ENCODE measurements at regions of chr19 and their contacts with region 1.

Region 1: DNA sequence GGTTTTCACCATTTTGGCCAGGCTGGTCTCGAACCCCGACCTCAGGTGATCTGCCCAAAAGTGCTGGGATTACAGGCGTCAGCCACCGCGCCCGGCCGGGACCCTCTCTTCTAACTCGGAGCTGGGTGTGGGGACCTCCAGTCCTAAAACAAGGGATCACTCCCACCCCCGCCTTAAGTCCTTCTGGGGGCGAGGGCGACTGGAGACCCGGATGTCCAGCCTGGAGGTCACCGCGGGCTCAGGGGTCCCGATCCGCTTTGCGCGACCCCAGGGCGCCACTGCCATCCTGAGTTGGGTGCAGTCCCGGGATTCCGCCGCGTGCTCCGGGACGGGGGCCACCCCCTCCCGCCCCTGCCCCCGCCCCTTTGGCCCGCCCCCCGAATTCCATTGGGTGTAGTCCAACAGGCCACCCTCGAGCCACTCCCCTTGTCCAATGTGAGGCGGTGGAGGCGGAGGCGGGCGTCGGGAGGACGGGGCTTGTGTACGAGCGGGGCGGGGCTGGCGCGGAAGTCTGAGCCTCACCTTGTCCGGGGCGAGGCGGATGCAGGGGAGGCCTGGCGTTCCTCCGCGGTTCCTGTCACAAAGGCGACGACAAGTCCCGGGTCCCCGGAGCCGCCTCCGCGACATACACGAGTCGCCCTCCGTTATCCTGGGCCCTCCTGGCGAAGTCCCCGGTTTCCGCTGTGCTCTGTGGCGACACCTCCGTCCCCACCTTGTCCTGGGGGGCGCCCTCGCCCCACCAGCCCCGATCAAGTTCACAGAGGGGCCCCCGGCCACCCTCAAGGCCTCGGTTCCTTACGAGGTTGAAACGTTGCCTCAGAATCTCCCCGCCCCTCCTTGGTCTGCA is 1.0 kb downstream of the LDLR start:
- DNase-seq: peak; percentile 90 to 98 (median 94)
- ATAC-seq: peak; percentile 91
- H3K4me3 ChIP-seq: peak overlapping the region; percentile 98
- H3K27ac ChIP-seq: peak overlapping the region; percentile 92
- H3K4me1 ChIP-seq: peaks cover 46 to 64% of the 10 kb centered on the region in 2 experiments
- H3K27me3 ChIP-seq: no peaks in the 10 kb centered on the region
- CTCF ChIP-seq: peak in 1 of 3 experiments; percentile 28; a peak in 2 of 6 replicates
- EP300 ChIP-seq: no peak
- POLR2A ChIP-seq: peak; percentile 80
- RAD21 ChIP-seq: no peak

Region 2: DNA sequence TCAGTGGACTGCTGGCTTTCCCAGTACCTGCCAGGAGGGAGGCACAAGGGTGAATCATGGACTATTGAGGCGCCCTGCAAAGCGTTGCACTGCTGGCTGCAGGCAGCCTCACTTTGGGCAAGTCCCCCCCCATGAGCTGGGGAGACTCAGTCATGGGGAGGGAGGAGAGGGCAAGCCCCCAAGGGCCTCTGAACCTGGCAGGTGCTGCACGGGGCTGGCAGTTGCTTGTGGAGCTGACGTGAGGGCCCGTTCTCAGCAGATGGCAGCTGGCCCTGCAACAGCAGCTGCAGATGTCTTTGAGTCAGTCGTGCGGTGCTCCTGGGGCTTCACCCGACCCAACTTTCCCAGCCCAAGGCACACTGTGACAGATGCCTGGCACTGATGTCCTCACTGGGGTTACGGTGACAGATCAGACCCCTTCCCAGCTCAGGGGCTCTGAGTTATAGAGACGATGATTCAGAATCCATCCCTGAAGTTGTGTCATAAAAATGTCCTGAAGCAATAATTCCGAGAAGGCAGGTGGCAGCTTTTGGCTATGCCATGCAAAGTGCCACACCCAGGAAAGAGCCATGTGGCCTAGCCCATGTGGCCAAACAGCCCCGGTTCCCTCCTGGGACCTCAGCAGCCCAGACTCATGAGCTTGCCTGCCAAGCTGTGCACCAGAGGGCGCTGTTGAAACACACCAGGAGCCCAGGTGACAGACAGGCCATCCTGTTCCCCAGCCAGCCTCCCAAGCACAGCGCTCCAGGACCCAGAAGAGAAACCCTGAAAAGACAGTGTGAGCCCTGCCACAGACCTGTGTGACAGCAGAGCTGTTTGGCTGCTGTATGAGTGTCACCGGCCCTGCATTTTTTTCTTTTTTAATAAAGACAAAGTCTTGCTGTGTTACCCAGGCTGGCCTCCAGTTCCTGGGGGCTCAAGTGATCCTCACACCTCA is 54.6 kb before region 1 on chr19:
- CTCF ChIA-PET with region 1: interaction called, 3 read pairs
- POLR2A ChIA-PET with region 1: interaction called, 4 read pairs
- in situ Hi-C with region 1: no loop called
- intact Hi-C with region 1: loop called (anchors 5 kb)
- DNase-seq: peak; percentile 77 to 92 (median 86)
- ATAC-seq: peak; percentile 99
- H3K4me3 ChIP-seq: no peak overlapping the region
- H3K27ac ChIP-seq: no peak overlapping the region
- H3K4me1 ChIP-seq: peaks cover 0 to 13% of the 10 kb centered on the region in 2 experiments; a peak in 1 of 5 replicates
- H3K27me3 ChIP-seq: no peaks in the 10 kb centered on the region
- CTCF ChIP-seq: peak; percentile 86 to 93 (median 89)
- EP300 ChIP-seq: no peak
- POLR2A ChIP-seq: no peak
- RAD21 ChIP-seq: peak; percentile 85 to 91

Region 3: DNA sequence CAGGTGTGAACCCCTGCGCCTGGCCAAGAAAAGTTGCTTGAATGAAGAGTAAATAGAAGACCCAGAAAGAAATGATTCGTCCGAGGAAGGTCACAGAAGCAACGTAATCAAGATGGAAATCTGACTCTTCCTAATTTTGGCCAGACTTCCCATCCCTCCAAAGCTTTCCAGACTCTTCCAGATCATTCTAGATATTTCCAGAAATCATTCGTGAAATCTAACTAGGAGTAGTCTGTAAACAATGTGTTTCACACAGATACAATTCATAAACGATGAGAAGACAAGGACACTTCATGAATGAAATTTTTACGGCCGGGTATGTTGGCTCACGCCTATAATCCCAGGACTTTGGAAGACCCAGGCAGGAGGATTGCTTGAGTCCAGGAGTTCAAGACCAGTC is 10.3 kb before region 1 on chr19:
- CTCF ChIA-PET with region 1: no interaction called
- POLR2A ChIA-PET with region 1: interaction called, 10 read pairs
- in situ Hi-C with region 1: no loop called
- intact Hi-C with region 1: no loop called
- DNase-seq: no peak
- ATAC-seq: no peak
- H3K4me3 ChIP-seq: no peak overlapping the region
- H3K27ac ChIP-seq: no peak overlapping the region
- H3K4me1 ChIP-seq: peaks cover 6 to 10% of the 10 kb centered on the region in 2 experiments; a peak in 3 of 5 replicates
- H3K27me3 ChIP-seq: no peaks in the 10 kb centered on the region
- CTCF ChIP-seq: no peak
- EP300 ChIP-seq: peak; percentile 29; the same call in 1 of the 2 replicates
- POLR2A ChIP-seq: no peak
- RAD21 ChIP-seq: no peak

Region 4: GRCh38 chr19:11106477-11106876 is 16.2 kb after region 1 on chr19:
- CTCF ChIA-PET with region 1: no interaction called
- POLR2A ChIA-PET with region 1: interaction called, 54 read pairs
- in situ Hi-C with region 1: no loop called
- intact Hi-C with region 1: no loop called
- DNase-seq: no peak
- ATAC-seq: no peak
- H3K4me3 ChIP-seq: no peak overlapping the region
- H3K27ac ChIP-seq: no peak overlapping the region
- H3K4me1 ChIP-seq: peaks cover 0 to 14% of the 10 kb centered on the region in 2 experiments; a peak in 1 of 5 replicates
- H3K27me3 ChIP-seq: no peaks in the 10 kb centered on the region
- CTCF ChIP-seq: no peak
- EP300 ChIP-seq: no peak
- POLR2A ChIP-seq: no peak; the same call in none of the 2 replicates
- RAD21 ChIP-seq: no peak